Sciatic nerve (tissue), 2 donors: ENCODE measurements at regions of chr1 and their contacts with region 1.

Region 1: GRCh38 chr1:68819190-68819829 is 322.4 kb upstream of the DEPDC1 start:
- DNase-seq: no peak
- ATAC-seq: peak; percentile 62

Region 2: DNA sequence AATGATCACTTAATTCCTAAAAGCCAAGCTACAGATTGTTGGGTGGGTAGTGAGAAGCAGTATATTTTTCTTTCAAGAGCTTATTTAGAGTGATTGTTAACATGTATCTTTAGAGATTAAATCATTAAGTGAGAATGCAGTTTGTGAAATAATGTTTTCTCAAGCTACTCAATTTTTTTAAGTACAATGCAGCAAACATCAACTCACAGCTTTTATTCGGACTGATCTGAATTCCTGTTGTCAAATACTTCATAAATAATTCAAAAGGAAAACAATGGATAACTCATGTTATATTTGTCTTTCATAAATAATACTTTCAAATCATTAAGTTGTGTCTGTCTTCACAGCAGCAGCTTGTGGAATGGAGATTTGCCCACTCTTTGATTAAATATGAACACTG is 51.4 kb before region 1 on chr1:
- intact Hi-C with region 1: loop called (anchors 2 kb)
- DNase-seq: no peak
- ATAC-seq: no peak